Heart left ventricle (tissue), 16 donors: ENCODE measurements at regions of chr4 and their contacts with region 1.

Region 1: GRCh38 chr4:55948726-55949474 is at the start of gene CEP135:
- DNase-seq: peak; percentile 95 to 97 (median 96)
- ATAC-seq: peak; percentile 94 to 98 (median 98)
- H3K4me3 ChIP-seq: peak within 1 kb of the TSS; percentile 32 to 88 (median 84)
- H3K27ac ChIP-seq: peak within 1 kb of the TSS; percentile 83 to 96 (median 92)
- H3K4me1 ChIP-seq: peaks cover 0 to 48% (median 13%) of the 10 kb centered on the region in 12 donors
- H3K27me3 ChIP-seq: no peaks in the 10 kb centered on the region
- CTCF ChIP-seq: peak; percentile 90 to 100 (median 96)
- POLR2A ChIP-seq: peak in 1 of 2 donors; percentile 38
- total RNA-seq, gene CEP135: 2.3 to 6.3 (median 2.5) TPM

Region 2: GRCh38 chr4:55853484-55854046 is 95.3 kb before region 1 on chr4 and contains the start of gene EXOC1:
- intact Hi-C with region 1: loop called in 2 of 10 experiments (anchors 5 kb)
- DNase-seq: peak; percentile 98 to 99 (median 99)
- ATAC-seq: peak; percentile 100
- H3K4me3 ChIP-seq: peak within 1 kb of the TSS; percentile 55 to 98 (median 91)
- H3K27ac ChIP-seq: peak within 1 kb of the TSS; percentile 64 to 92 (median 87)
- H3K4me1 ChIP-seq: peaks cover 3 to 30% (median 18%) of the 10 kb centered on the region in 12 donors
- H3K27me3 ChIP-seq: no peaks in the 10 kb centered on the region
- CTCF ChIP-seq: no peak
- POLR2A ChIP-seq: peak in 1 of 2 donors; percentile 68
- total RNA-seq, gene EXOC1: 15.2 to 27.7 (median 21.4) TPM

Region 3: DNA sequence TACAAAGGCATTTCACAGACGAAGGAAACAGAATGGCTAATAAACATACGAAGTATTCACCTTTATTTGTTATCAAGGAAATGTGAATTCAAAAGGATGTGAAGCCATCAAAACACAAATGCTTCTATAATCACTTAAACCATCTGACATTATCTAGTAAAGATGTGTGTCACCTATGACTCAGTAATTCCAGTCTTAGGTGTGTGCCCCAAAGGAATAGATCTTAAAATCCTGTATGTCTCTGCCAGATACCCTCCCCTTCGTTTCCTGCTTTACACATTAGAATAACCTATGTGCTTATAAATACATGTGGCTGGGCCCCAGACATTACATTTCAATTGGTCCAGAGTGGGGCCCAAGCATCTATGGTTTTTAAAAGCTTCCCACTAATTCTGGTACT is 41.9 kb before region 1 on chr4:
- intact Hi-C with region 1: loop called in 2 of 10 experiments (anchors 5 kb)
- DNase-seq: no peak
- ATAC-seq: peak in 3 of 4 donors; percentile 24 to 53 (median 53)
- H3K4me3 ChIP-seq: no peak overlapping the region
- H3K27ac ChIP-seq: peak overlapping the region in 2 of 12 donors; percentile 12 to 36
- H3K4me1 ChIP-seq: peaks cover 0 to 11% (median 0%) of the 10 kb centered on the region in 12 donors
- H3K27me3 ChIP-seq: no peaks in the 10 kb centered on the region
- CTCF ChIP-seq: no peak
- POLR2A ChIP-seq: no peak

Region 4: GRCh38 chr4:56301181-56302076 is 352.5 kb after region 1 on chr4:
- intact Hi-C with region 1: loop called in 9 of 10 experiments (anchors 1 to 5 kb)
- DNase-seq: peak in 4 of 5 donors; percentile 46 to 77 (median 56)
- ATAC-seq: peak; percentile 58 to 98 (median 91)
- H3K4me3 ChIP-seq: no peak overlapping the region
- H3K27ac ChIP-seq: no peak overlapping the region
- H3K4me1 ChIP-seq: peaks cover 0 to 9% (median 0%) of the 10 kb centered on the region in 12 donors
- H3K27me3 ChIP-seq: peaks cover 0 to 6% (median 0%) of the 10 kb centered on the region in 9 donors
- CTCF ChIP-seq: peak; percentile 60 to 92 (median 74)
- POLR2A ChIP-seq: no peak

Region 5: GRCh38 chr4:56387023-56388001 is 438.4 kb after region 1 on chr4 and contains the start of gene AASDH:
- intact Hi-C with region 1: loop called in 1 of 10 experiments (anchors 5 kb)
- DNase-seq: peak; percentile 91 to 95 (median 94)
- ATAC-seq: peak; percentile 97 to 98 (median 98)
- H3K4me3 ChIP-seq: peak within 1 kb of the TSS; percentile 51 to 90 (median 78)
- H3K27ac ChIP-seq: peak within 1 kb of the TSS; percentile 85 to 99 (median 96)
- H3K4me1 ChIP-seq: peaks cover 0 to 26% (median 15%) of the 10 kb centered on the region in 12 donors
- H3K27me3 ChIP-seq: no peaks in the 10 kb centered on the region
- CTCF ChIP-seq: no peak
- POLR2A ChIP-seq: peak in 1 of 2 donors; percentile 74
- total RNA-seq, gene AASDH: 3.1 to 11.7 (median 5.3) TPM

Region 6: GRCh38 chr4:56544573-56545131 is 595.8 kb after region 1 on chr4:
- intact Hi-C with region 1: loop called in 1 of 10 experiments (anchors 5 kb)
- DNase-seq: peak; percentile 79 to 92 (median 85)
- ATAC-seq: peak; percentile 85 to 99 (median 99)
- H3K4me3 ChIP-seq: peak overlapping the region in 10 of 12 donors; percentile 12 to 53 (median 41)
- H3K27ac ChIP-seq: no peak overlapping the region
- H3K4me1 ChIP-seq: peaks cover 0 to 7% (median 0%) of the 10 kb centered on the region in 12 donors
- H3K27me3 ChIP-seq: peaks cover 0 to 16% (median 0%) of the 10 kb centered on the region in 9 donors
- CTCF ChIP-seq: peak; percentile 96 to 100 (median 98)
- POLR2A ChIP-seq: no peak

Region 7: DNA sequence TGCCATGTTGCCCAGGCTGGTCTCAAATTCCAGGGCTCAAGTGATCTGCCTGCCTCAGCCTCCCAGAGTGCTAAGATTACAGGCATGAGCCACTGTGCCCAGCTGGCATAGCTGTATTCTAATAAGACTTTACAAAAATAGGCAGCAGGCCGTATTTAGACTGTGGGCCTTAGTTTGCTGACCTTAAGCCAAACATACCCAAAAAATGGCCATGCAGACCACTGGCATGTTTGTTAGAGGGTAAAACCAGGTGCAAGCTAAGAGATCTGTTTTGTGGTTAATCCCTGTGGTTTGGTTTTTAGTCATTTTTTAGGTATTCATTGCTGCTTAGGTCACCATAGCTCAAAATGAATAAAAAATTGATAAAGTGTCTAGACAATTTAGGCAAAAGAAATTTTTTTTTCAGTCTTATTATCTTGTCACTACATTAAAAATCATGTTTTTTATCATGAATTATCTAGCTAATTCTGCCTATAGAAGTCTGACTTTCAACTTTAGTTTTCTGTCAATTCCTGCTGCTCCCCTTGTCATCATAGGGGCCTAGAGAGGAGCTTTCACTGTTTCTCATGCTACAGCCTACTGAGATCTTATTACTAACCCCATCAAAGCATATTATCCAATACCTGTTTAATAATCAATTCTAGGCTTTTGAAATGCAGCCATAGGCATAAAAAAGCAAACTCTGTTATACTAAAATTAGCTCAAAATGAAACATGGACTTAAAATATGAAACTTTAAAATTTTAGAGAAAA is 880.1 kb after region 1 on chr4:
- intact Hi-C with region 1: loop called in 1 of 10 experiments (anchors 10 kb)
- DNase-seq: no peak
- ATAC-seq: no peak
- H3K4me3 ChIP-seq: no peak overlapping the region
- H3K27ac ChIP-seq: no peak overlapping the region
- H3K4me1 ChIP-seq: no peaks in the 10 kb centered on the region
- H3K27me3 ChIP-seq: peaks cover 0 to 2% (median 0%) of the 10 kb centered on the region in 9 donors
- CTCF ChIP-seq: no peak
- POLR2A ChIP-seq: no peak